ENCODE measurements at regions of chr1 and their contacts with region 1.

Region 1: DNA sequence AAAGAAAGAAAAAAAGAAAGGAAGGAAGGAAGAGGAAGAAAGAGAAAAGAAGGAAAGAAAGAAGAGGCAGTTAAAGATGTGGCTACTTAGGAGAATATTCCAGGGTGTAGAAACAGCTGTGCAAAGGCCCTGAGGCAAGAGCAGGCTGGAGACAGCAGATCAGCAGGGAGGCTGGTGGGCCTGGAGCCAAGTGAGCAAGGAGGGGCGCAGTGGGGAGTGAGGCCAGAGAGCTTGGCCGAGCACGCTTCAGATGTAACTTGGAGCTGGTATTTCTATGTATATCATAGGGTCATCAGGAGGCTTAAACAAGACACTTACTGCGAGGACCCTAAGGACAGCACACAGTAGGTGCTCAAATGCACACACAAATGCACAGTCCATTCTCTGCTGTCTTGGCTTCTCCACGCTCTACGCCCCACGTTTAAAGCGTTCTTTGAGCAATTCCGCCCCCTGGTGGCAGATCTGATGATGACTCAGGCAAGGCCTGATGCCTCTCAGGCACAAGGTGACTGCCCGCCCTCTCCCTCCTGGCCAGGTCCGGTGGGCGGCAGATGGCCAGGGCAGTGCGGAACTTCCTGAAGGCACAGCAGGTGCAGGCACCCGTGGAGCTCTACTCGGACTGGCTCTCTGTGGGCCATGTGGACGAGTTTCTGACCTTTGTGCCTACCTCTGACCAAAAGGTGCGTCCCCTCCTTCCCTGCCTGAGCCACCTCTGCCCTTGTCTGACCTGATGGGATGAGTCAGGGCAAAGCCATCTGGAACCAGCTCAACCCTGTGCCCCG is 11.9 kb upstream of the PADI3 start:
- DNase-seq: peak; percentile 80
- ATAC-seq: peak; percentile 70
- H3K4me3 Mint-ChIP-seq: no peak overlapping the region
- H3K27ac Mint-ChIP-seq: no peak overlapping the region
- H3K4me1 Mint-ChIP-seq: peaks cover 21% of the 10 kb centered on the region
- H3K27me3 Mint-ChIP-seq: no peaks in the 10 kb centered on the region
- CTCF ChIP-seq: peak; percentile 47

Region 2: DNA sequence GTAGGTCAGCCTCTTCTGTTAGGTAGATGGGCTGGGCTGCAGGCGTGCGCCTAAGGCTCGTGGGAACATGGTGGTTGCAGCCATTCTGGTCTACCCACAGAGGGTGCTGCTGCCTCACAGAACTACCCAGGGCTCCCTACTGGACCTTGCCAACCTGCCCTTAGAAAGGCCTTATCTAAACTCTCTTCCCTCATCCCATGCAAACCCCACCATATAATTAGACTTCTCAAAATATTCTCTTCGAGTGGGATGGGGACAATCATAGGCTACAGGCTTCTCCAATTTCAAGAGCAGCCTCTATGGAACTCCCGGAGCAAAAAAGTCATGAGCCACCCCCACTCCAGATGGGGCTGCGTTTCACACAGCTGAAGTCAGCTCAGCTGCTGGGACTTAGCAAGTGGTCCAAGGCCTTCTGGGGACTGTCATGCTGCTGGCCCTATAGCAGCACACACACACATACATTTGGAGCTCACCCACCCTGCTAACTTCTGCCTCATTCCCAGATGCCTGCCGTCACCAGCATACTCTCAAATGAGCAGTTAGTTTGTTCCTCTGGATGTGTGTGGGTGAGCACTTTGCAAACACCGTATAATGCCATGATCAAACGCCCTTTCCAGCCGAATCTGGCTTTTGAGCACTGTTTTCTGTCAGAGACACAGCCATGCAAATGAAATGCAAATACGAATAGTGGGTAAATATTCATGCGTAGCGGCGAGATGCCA is 177.1 kb before region 1 on chr1:
- CTCF ChIA-PET with region 1: interaction called, 15 read pairs
- POLR2A ChIA-PET with region 1: no interaction called
- intact Hi-C with region 1: loop called (anchors 1 kb)
- DNase-seq: peak; percentile 33
- ATAC-seq: peak; percentile 97
- H3K4me3 Mint-ChIP-seq: peak overlapping the region; percentile 15
- H3K27ac Mint-ChIP-seq: no peak overlapping the region
- H3K4me1 Mint-ChIP-seq: peaks cover 12% of the 10 kb centered on the region
- H3K27me3 Mint-ChIP-seq: peaks cover 7% of the 10 kb centered on the region
- CTCF ChIP-seq: no peak

Region 3: DNA sequence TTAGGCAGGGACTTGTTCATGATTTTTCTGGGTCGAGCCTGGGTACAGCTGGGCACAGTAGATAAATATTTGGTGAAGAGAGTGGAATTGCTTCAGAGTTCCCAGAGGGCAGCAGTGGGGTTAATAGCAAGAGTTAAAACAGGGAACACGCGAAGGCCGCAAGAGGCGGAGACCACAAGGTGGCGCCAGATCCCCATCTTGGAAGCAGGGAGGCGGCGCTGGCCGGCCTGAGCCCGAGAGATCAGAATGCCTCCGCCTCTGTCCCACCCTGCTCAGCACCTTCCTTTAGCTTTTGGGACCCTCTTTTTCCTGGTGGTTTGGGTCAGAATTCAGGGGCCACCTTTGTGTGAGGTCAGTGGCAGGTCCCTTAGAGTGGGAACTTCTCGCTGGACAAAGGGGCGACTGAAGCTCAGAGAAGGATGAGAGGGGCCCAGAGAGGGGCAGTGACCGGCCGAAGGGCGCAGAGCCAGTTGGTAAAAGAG is 111.2 kb before region 1 on chr1:
- CTCF ChIA-PET with region 1: interaction called, 206 read pairs
- POLR2A ChIA-PET with region 1: interaction called, 21 read pairs
- intact Hi-C with region 1: loop called (anchors 1 kb)
- DNase-seq: peak; percentile 84
- ATAC-seq: peak; percentile 79
- H3K4me3 Mint-ChIP-seq: no peak overlapping the region
- H3K27ac Mint-ChIP-seq: peak overlapping the region; percentile 18
- H3K4me1 Mint-ChIP-seq: peaks cover 38% of the 10 kb centered on the region
- H3K27me3 Mint-ChIP-seq: no peaks in the 10 kb centered on the region
- CTCF ChIP-seq: peak; percentile 81

Region 4: DNA sequence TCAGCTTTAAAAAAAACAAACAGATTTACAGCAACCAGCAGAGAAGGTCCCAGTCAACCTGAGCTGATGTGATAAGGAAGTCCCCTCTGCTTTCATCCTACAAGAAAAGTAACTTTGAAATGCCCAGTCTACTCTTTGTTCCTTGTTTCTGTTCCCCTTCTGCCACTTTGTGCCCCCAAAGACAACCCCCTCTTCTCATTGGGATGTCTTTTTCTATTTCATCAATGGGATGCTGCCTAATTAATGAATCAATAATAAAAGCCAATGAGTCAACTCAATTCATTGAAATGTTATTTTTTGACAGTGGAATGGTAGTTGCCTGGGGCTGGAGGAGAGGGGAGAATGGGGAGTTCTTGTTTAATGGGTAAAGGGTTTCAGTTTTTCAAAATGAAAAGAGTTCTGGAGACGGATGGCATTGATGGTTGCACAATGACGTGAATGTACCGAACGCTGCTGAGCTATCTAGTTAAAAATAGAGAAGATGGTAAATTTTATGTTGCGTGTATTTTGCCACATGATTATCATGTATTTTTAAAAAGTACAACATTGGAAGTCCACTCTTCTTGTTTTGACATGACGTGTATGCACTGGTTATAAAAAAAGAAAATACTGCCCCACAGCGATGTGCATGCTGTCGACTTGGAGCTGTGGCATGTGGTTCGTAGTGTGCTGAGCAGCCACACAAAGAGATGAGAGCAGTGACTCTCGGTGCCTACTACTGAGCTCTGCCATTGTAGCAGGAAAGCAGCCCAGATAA is 95.4 kb before region 1 on chr1:
- CTCF ChIA-PET with region 1: interaction called, 19 read pairs
- POLR2A ChIA-PET with region 1: interaction called, 4 read pairs
- intact Hi-C with region 1: loop called (anchors 1 kb)
- DNase-seq: no peak
- ATAC-seq: peak; percentile 78
- H3K4me3 Mint-ChIP-seq: peak overlapping the region; percentile 72
- H3K27ac Mint-ChIP-seq: peak overlapping the region; percentile 94
- H3K4me1 Mint-ChIP-seq: peaks cover 33% of the 10 kb centered on the region
- H3K27me3 Mint-ChIP-seq: no peaks in the 10 kb centered on the region
- CTCF ChIP-seq: no peak

Region 5: DNA sequence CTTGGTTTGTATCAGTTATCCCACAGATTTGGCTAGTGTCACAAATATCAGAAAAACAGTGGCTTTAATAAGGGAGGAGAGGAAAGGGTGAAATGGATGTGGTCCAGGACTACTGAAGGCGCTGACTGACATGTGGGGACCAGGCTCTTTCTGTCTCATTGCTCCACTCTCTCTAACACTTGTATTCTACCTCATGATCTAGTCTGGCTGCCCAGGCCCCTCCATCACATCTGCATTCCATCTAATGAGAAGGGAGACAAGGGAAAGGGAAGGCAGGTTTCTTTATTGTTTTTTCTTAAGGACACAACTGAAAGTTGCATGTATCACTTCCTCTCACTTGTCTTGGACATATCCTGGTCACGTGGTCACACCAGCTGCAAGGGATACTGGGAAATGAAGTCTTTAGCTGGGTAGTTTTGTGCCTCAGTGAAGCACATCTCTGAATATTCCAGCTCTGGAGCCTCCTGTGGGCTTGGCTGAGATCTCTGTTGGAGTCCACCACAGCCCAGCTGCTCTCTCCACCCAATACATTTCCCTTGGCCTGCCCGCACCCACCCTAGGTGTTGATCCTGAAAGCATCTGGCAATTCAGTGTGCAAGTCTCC is 75.7 kb before region 1 on chr1:
- CTCF ChIA-PET with region 1: no interaction called
- POLR2A ChIA-PET with region 1: no interaction called
- intact Hi-C with region 1: no loop called
- DNase-seq: no peak
- ATAC-seq: no peak
- H3K4me3 Mint-ChIP-seq: no peak overlapping the region
- H3K27ac Mint-ChIP-seq: no peak overlapping the region
- H3K4me1 Mint-ChIP-seq: no peaks in the 10 kb centered on the region
- H3K27me3 Mint-ChIP-seq: no peaks in the 10 kb centered on the region
- CTCF ChIP-seq: no peak

Region 6: DNA sequence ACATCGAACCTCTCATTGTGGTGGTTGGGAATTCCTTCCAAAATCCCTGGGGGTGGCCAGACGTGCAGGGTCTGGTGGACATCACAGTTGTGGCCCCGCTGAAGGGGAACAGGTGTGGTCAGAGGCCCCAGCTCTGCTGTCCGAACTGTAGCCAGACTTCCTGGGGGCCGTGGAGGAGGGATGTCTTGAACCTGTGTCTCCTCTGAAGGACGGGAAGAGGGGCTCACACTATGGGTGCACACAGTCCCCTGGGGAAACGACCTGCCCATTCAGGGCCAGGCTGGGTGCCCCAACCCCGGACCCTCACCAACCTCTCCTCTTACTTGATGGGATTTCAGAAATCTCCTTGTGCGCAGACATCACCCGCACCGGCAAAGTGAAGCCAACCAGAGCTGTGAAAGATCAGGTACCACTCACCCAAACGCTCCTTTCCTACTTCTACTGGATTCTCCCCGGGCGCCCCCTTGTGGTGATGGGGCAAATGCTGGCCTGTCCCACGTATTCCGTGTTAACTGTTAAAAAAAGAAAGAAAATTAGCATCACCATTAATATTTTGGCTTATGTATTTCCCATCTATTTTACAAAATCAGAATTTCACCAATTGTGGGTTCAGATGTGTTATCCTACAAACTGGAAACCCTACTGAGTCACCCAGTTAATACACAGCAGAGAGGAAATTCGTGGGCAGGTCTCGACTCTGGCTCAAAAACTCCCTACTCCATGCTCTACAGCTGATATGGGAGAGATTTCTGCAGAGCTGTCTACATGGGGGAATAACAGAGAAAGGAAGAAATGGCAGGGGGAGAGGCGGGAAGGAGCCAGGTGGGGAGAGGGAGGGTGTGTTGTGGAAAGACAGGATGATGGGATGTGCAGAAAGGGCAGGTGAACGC is 99.1 kb after region 1 on chr1:
- CTCF ChIA-PET with region 1: interaction called, 4 read pairs
- POLR2A ChIA-PET with region 1: no interaction called
- intact Hi-C with region 1: loop called (anchors 2 kb)
- DNase-seq: peak; percentile 61
- ATAC-seq: no peak
- H3K4me3 Mint-ChIP-seq: no peak overlapping the region
- H3K27ac Mint-ChIP-seq: no peak overlapping the region
- H3K4me1 Mint-ChIP-seq: no peaks in the 10 kb centered on the region
- H3K27me3 Mint-ChIP-seq: peaks cover 19% of the 10 kb centered on the region
- CTCF ChIP-seq: peak; percentile 82

Region 7: GRCh38 chr1:17405898-17406759 is 169.2 kb after region 1 on chr1:
- CTCF ChIA-PET with region 1: no interaction called
- POLR2A ChIA-PET with region 1: no interaction called
- intact Hi-C with region 1: loop called (anchors 10 kb)
- DNase-seq: peak; percentile 36
- ATAC-seq: peak; percentile 95
- H3K4me3 Mint-ChIP-seq: no peak overlapping the region
- H3K27ac Mint-ChIP-seq: no peak overlapping the region
- H3K4me1 Mint-ChIP-seq: no peaks in the 10 kb centered on the region
- H3K27me3 Mint-ChIP-seq: no peaks in the 10 kb centered on the region
- CTCF ChIP-seq: no peak

Region 8: GRCh38 chr1:17719874-17720273 is 482.9 kb after region 1 on chr1:
- CTCF ChIA-PET with region 1: no interaction called
- POLR2A ChIA-PET with region 1: no interaction called
- intact Hi-C with region 1: no loop called
- DNase-seq: no peak
- ATAC-seq: no peak
- H3K4me3 Mint-ChIP-seq: no peak overlapping the region
- H3K27ac Mint-ChIP-seq: no peak overlapping the region
- H3K4me1 Mint-ChIP-seq: no peaks in the 10 kb centered on the region
- H3K27me3 Mint-ChIP-seq: peaks cover 6% of the 10 kb centered on the region
- CTCF ChIP-seq: no peak

Measured in activated B cell treated with CpG ODN at 0.5 μM for 24 hours (primary cell).